HAP-1 (cell line): ENCODE measurements at regions of chr5 and their contacts with region 1.

Region 1: GRCh38 chr5:102545175-102545574 is 46.4 kb upstream of the SLCO6A1 start:
- DNase-seq: peak in 1 of 2 experiments; percentile 56
- H3K4me3 ChIP-seq: no peak overlapping the region
- H3K4me1 ChIP-seq: no peaks in the 10 kb centered on the region
- H3K27me3 ChIP-seq: no peaks in the 10 kb centered on the region

Region 2: DNA sequence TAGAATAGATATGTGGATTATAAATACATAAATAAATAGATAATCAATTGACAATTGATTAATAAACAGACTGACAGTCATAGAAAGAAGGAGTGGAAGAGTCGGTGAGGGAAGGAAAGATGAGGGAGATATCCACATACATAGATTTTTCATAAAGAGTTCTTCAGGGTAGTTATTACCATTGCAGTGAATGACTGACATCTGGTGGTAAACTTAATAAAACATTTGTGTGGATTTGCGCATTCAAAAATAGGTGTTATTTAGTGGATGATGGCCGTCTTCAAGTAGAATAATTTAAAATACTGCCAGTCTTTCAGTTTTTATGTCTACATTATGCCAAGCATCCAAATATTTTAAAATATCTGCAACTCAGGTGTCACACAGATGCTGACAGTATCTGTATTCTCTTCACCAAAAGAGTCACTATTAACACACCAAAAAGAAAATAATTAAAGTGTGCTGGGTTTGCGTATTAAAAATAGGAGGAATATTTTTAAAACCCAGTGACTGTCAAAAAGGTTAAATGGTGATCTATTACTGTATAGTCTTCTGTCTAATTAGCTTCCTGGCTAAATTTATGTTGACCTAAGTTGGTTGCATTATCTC is 496.0 kb after region 1 on chr5:
- in situ Hi-C with region 1: loop called (anchors 25 kb)
- DNase-seq: peak in 1 of 2 experiments; percentile 64
- H3K4me3 ChIP-seq: no peak overlapping the region
- H3K4me1 ChIP-seq: no peaks in the 10 kb centered on the region
- H3K27me3 ChIP-seq: no peaks in the 10 kb centered on the region